ENCODE measurements at regions of chr4 and their contacts with region 1.

Region 1: GRCh38 chr4:1746265-1746691 is 25.0 kb downstream of the TACC3 start:
- DNase-seq: peak; percentile 86 to 94 (median 92)
- H3K4me3 ChIP-seq: no peak overlapping the region
- H3K27ac ChIP-seq: no peak overlapping the region
- H3K4me1 ChIP-seq: peaks cover 0 to 20% (median 14%) of the 10 kb centered on the region in 4 experiments
- H3K27me3 ChIP-seq: no peaks in the 10 kb centered on the region

Region 2: GRCh38 chr4:1726146-1726934 is 19.9 kb before region 1 on chr4:
- CTCF ChIA-PET with region 1: interaction called, 38 read pairs
- POLR2A ChIA-PET with region 1: no interaction called
- DNase-seq: peak; percentile 87 to 93 (median 90)
- H3K4me3 ChIP-seq: peak overlapping the region in 4 of 7 experiments; percentile 20 to 70 (median 40)
- H3K27ac ChIP-seq: peak overlapping the region; percentile 59 to 68
- H3K4me1 ChIP-seq: peaks cover 12 to 83% (median 75%) of the 10 kb centered on the region in 4 experiments
- H3K27me3 ChIP-seq: no peaks in the 10 kb centered on the region

Region 3: DNA sequence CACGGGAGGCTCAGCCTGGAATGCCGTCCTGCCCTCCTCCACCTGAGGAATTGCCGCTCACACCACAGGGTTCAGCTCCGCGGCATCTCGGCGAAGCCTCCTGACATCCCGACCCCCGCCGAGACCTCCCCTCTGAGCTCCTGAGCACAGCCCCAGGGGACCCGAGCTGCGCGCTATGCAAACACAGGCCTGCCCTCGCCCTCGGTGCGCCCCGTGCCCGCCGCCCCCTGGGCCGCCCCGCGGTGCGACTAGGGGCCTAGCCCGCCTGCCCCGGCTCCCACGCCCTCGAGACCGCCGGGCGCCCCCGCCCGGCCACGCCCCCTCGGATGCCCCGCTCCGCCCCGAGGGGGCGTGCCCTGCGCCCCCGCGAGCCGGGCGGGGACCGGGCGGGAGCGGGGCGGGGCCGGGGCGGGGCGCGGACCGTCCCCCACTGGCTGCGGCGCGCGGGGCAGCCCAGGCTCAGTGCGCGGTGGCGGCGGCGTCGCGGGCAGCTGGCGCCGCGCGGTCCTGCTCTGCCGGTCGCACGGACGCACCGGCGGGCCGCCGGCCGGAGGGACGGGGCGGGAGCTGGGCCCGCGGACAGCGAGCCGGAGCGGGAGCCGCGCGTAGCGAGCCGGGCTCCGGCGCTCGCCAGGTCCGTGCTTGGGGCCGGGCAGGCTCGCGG is 46.7 kb after region 1 on chr4 and contains the start of gene FGFR3:
- CTCF ChIA-PET with region 1: interaction called, 28 read pairs
- POLR2A ChIA-PET with region 1: no interaction called
- DNase-seq: peak in 2 of 3 donors; percentile 54 to 61
- H3K4me3 ChIP-seq: peak within 1 kb of the TSS; percentile 12 to 71 (median 54)
- H3K27ac ChIP-seq: no peak within 1 kb of the TSS
- H3K4me1 ChIP-seq: peaks cover 0 to 24% (median 20%) of the 10 kb centered on the region in 4 experiments
- H3K27me3 ChIP-seq: peaks cover 0 to 48% (median 14%) of the 10 kb centered on the region in 5 experiments

Region 4: DNA sequence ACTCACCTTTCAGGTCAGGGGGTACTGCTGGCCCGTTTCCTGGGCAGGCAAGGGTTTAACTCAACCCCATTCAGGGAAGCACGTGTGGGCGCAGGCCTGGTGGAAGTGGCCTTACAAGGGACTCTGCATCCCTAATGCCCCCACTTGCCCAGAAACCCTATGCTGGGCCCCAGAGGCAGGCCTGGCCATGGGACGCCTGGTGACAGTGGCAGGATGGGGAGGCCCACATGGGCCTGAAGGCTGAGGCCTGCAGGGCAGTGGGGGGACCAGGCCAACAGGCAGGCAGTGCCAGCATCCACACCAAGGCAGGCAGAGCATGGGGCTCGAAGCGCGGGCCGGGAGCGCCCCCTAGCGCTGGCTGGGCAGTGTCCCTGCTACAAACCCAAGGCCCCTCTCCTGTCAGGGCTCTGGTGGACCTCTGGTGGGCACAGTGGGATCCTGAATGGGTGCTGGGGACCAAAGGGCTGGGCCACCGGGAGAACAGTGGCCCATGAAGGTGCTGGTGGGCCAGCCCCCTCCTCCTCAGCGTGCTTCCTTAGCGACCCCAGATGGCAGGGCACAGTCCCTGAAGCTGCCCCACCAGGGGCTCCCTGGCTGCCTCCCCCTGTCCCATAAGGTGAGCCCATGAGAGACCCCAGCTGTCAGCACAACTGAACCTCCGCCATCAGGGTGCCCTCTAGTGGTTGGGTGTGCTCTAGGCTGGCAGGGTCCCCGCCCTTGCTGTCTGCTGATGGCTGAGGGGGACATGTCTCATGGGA is 63.7 kb after region 1 on chr4:
- CTCF ChIA-PET with region 1: interaction called, 168 read pairs
- POLR2A ChIA-PET with region 1: no interaction called
- DNase-seq: peak; percentile 76 to 88 (median 85)
- H3K4me3 ChIP-seq: no peak overlapping the region
- H3K27ac ChIP-seq: no peak overlapping the region
- H3K4me1 ChIP-seq: no peaks in the 10 kb centered on the region
- H3K27me3 ChIP-seq: no peaks in the 10 kb centered on the region

Region 5: DNA sequence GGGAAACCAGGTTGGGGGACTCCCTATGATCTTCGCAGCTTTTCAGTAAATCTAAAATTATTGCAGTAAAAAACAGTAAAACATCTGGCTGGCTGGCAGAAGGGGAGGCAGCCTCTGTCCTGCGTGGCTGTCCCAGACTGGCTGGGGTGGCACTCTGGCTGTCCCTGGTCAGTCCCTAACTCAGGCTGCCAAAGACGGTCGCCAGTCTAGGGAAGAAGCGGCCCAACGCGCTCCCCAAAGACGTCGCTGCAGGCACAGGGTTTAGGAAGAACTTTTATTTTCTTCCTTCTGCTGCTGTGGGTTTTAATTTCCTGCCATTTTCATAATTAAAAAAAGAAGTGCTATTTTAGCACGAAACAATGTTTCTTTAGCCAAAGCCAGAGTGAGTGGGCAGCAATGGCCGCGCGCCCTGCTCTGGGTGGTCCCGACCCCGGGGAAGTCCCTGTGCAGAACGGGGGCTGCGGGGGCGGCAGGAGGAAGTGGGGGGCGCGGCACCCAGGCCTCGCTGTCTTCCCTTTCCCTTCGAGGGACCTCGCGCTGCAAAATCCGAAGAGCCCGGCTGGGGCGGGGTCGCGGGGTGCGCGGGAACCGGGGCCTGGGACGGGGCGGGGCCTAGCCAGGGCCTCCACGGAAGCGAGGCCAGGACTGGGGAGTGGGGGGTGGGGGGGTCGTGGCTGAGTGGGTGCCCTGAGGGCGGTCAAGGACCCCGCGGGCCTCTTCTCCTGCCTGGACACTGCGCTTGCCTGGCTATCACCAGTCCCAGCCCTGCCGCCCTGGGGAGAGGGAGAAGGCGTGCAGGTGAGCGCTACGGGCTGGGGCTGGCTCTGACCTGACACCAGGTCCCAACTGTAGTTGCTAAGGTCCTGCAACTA is 116.0 kb after region 1 on chr4:
- CTCF ChIA-PET with region 1: no interaction called
- POLR2A ChIA-PET with region 1: no interaction called
- DNase-seq: peak in 2 of 3 donors; percentile 37 to 52
- H3K4me3 ChIP-seq: peak overlapping the region; percentile 32 to 77 (median 48)
- H3K27ac ChIP-seq: peak overlapping the region in 1 of 2 experiments; percentile 25
- H3K4me1 ChIP-seq: peaks cover 0 to 28% (median 23%) of the 10 kb centered on the region in 4 experiments
- H3K27me3 ChIP-seq: no peaks in the 10 kb centered on the region

Region 6: DNA sequence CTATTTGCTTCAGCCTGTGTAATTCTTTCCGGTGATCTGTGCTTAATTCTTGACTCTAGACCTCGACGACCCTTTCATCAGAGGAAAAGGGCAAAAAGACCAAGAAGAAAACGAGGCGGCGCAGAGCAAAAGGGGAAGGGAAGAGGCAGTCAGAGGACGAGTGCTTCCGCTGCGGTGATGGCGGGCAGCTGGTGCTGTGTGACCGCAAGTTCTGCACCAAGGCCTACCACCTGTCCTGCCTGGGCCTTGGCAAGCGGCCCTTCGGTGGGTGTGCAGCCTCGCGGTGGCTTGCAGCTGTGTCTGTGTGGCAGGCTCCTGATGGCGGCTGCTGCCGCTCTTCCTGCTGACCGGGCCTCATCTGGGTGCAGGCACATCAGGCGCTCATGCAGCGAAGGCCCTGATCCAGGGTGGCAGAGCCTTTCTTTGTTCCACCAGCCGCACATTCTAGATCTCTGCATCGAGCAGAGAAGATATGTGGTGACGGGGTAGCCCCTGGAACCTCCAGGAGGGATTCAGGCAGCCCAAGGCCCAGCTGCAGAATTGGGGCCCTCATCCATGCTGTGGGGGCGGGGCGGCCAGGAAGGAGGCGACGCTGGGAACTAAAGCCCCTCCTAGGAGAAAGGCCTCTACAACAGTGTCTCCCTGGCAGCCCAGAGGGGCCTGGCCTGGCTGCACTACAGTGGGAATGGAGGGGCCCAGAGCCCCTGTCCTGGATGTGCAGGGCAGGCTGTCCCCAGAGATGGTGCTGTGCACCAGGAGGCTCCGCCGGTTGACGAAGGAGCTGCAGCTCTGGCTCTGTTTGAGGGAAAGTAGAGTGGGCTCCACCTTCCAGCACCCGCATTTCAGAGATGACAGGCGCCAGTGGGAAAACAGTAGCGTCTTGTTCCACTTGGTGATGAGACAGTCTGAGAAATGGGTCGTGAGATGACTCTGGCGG is 230.4 kb after region 1 on chr4:
- CTCF ChIA-PET with region 1: no interaction called
- POLR2A ChIA-PET with region 1: no interaction called
- DNase-seq: no peak
- H3K4me3 ChIP-seq: no peak overlapping the region
- H3K27ac ChIP-seq: no peak overlapping the region
- H3K4me1 ChIP-seq: no peaks in the 10 kb centered on the region
- H3K27me3 ChIP-seq: no peaks in the 10 kb centered on the region